ENCODE measurements at regions of chr5 and their contacts with region 1.

Region 1: DNA sequence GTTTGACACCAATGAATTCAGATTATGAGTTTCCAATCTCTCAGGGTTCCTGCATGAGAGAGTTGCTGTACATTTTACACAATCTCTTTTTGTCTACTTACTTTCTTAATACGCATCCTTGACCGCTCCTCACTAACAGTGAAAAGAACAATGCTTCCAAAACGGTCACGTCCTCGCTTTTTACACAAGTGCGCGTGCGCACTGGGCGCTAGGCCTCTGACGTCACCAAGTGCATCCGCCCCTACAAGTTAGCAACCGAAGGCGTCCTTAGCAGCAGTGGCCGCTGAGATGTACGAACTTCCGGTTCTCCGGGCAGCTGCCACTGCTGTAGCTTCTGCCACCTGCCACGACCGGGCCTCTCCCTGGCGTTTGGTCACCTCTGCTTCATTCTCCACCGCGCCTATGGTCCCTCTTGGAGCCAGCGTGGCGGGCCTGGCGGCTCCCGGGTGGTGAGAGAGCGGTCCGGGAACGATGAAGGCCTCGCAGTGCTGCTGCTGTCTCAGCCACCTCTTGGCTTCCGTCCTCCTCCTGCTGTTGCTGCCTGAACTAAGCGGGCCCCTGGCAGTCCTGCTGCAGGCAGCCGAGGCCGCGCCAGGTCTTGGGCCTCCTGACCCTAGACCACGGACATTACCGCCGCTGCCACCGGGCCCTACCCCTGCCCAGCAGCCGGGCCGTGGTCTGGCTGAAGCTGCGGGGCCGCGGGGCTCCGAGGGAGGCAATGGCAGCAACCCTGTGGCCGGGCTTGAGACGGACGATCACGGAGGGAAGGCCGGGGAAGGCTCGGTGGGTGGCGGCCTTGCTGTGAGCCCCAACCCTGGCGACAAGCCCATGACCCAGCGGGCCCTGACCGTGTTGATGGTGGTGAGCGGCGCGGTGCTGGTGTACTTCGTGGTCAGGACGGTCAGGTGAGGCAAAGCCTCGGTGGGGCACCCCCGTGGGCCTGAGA is at the start of gene FAM174A:
- DNase-seq: peak; percentile 99
- ATAC-seq: peak; percentile 93
- H3K4me3 ChIP-seq: peak within 1 kb of the TSS; percentile 83
- H3K27ac ChIP-seq: peak within 1 kb of the TSS; percentile 28
- H3K4me1 ChIP-seq: peaks cover 18% of the 10 kb centered on the region
- H3K27me3 ChIP-seq: no peaks in the 10 kb centered on the region
- CTCF ChIP-seq: no peak
- total RNA-seq, gene FAM174A: 65.1 and 66.2 TPM in 2 replicates

Region 2: DNA sequence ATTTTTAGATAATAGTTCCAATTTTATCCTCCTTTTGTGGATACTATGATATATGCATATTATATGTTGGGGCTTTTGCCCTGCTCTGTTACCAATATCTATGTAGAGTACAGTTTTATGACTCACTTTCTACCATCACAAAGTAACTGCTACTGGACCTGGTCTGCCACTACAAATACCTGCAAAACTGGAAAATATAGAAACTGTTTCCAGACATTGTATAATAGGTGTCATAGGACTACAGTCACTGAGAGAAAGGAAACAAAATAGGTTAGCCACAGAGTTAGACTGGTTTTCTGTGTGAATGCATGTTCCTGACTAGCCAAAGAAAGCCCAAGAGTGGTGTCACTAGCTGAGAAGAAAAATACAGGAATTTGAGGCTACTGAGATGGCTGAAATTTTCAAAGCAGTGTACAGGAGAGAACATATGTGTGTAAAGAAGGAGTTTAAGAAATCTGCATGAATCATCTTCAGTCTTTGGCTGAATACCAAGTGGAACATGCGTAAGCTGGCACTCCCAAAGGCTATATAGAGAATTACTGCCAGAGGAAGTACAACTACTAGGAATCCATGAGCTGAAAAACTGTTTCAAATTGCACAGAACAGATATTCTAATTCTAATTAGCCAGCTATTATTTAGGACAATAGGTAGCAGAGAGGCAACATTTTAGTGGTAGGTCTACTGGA is 29.2 kb before region 1 on chr5:
- CTCF ChIA-PET with region 1: no interaction called
- POLR2A ChIA-PET with region 1: interaction called, 3 read pairs
- intact Hi-C with region 1: loop called (anchors 2 kb)
- DNase-seq: peak; percentile 95
- ATAC-seq: peak; percentile 99
- H3K4me3 ChIP-seq: no peak overlapping the region
- H3K27ac ChIP-seq: peak overlapping the region; percentile 16
- H3K4me1 ChIP-seq: peaks cover 11% of the 10 kb centered on the region
- H3K27me3 ChIP-seq: no peaks in the 10 kb centered on the region
- CTCF ChIP-seq: no peak

Region 3: GRCh38 chr5:100550531-100551037 is 15.3 kb after region 1 on chr5:
- CTCF ChIA-PET with region 1: no interaction called
- POLR2A ChIA-PET with region 1: no interaction called
- intact Hi-C with region 1: loop called (anchors 1 kb)
- DNase-seq: peak; percentile 41
- ATAC-seq: peak; percentile 76
- H3K4me3 ChIP-seq: no peak overlapping the region
- H3K27ac ChIP-seq: peak overlapping the region; percentile 59
- H3K4me1 ChIP-seq: peaks cover 11% of the 10 kb centered on the region
- H3K27me3 ChIP-seq: no peaks in the 10 kb centered on the region
- CTCF ChIP-seq: no peak